GM10248 (cell line): ENCODE measurements at regions of chr7 and their contacts with region 1.

Region 1: GRCh38 chr7:123154231-123154860 is 45.4 kb downstream of the SLC13A1 start:
- DNase-seq: peak; percentile 29
- CTCF ChIP-seq: peak; percentile 81

Region 2: GRCh38 chr7:122951006-122951405 is 203.3 kb before region 1 on chr7:
- CTCF ChIA-PET with region 1: no interaction called
- POLR2A ChIA-PET with region 1: no interaction called
- DNase-seq: no peak
- CTCF ChIP-seq: no peak

Region 3: GRCh38 chr7:123131140-123131539 is 23.2 kb before region 1 on chr7:
- CTCF ChIA-PET with region 1: interaction called, 10 read pairs
- POLR2A ChIA-PET with region 1: no interaction called
- DNase-seq: no peak
- CTCF ChIP-seq: no peak

Region 4: DNA sequence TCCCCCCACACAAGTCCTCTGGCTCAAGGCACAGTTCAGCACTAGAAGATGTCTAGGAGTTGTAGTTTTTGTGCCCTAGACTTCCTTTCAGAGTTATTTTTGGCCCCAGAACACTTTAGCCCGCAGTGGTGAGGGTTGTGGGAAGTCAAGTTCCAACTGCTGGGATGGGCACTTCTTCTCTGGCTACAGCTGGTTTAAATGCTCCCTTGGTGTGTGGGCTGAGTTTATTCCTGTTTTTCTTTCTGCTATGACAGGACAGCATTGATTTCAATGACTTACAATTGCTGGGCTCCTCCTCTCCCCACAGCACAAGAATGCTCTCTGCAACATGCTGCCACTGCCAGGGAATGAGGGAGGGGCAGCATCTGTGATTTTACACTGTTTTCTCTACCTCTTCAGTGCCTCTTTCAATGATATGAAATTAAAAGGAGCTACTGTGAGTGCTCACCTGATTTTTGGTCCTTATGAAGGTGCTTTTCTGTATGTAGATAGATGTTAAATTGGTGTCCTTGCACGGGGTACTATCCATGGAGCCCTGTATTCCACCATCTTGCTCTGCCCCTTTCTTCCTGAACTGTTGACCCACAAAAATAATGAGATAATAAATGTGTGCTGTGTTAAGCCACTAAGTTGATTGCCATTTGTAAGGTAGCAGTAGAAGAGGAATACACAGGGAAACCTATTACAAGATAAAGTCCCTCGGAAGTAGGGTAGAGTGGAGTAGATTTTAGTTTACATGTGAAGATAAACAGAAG is 10.9 kb before region 1 on chr7:
- CTCF ChIA-PET with region 1: interaction called, 34 read pairs
- POLR2A ChIA-PET with region 1: no interaction called
- DNase-seq: no peak
- CTCF ChIP-seq: no peak

Region 5: GRCh38 chr7:123170333-123171246 is 16.2 kb after region 1 on chr7:
- CTCF ChIA-PET with region 1: interaction called, 30 read pairs
- POLR2A ChIA-PET with region 1: no interaction called
- DNase-seq: no peak
- CTCF ChIP-seq: no peak

Region 6: DNA sequence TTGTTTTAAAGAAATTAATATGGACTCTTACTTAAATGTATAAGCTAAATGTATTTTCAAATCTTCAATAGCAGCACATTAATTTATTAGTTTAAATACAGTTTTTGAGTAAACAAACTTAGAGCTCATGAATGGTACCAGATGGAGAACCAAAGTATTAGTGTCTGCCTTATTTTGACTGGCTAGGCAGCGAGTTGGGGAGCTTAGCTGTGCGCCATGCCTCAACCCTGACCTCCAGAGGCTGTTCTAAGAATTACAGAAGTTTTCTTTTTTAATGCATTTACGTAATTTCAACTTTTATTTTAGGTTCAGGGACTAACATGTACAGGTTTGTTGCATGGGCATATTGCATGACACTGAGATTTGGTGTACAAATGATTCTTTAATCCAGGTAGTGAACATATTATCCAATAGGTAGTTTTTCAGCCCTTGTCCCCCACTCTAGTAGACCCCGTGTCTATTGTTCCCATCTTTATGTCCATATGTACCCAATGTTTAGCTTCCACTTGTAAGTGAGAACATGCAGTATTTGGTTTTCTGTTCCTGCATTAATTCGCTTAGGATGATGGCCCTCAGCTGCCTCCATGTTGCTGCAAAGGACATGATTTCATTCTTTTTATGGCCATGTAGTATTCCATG is 213.3 kb after region 1 on chr7:
- CTCF ChIA-PET with region 1: interaction called, 24 read pairs
- POLR2A ChIA-PET with region 1: no interaction called
- DNase-seq: peak; percentile 53
- CTCF ChIP-seq: peak; percentile 75